Activated T-helper 2 cell treated with anti-CD3 and anti-CD28 coated beads, Interferon-gamma antibody, Interleukin-2, Interleukin-4, amounts not matched to agents 10 μg/mL and 5 μg/mL and 100 μg/mL, durations not matched to agents 14 hours and 24 hours and 36 hours (primary cell): ENCODE measurements at regions of chr20 and their contacts with region 1.

Region 1: DNA sequence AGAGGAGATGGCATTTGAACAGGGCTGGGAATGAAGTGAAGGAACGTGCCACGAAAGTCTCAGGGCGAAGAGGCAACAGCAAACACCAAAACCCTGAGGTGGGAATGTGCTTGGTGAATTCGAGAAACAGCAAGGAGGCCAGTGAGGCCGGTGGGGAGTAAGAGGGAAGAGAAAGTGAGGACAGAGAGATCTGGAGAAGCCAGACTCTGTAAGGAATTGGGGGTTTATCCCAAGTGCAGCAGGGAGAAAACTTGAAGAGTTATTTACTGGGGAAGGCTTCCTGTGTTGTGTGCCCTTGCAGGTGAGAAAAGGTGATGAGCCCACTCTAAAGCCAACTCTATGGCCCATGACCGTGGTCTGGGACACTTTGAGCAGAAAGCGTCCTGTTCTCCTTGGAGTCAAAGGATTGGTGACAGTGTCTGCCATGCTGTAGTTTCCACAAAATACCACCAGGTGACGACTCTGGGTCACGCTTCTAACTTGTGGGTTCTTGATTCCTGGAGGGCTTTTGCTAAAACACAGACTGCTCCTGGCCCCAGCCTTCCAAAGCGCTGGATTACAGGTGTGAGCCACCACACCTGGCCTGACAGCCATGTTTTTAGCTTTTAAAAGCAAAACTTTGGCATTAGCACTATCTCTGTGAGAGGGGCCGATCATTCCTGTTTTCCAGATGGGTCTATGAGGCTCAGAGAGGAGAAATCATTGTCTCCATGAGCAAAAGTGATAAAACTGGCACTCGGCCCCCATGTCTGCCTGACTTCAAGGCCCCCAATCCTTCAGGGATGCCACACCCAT is 18.0 kb upstream of the CSNK2A1 start:
- DNase-seq: peak; percentile 34
- H3K4me3 Mint-ChIP-seq: no peak overlapping the region
- H3K27ac Mint-ChIP-seq: no peak overlapping the region
- H3K4me1 Mint-ChIP-seq: no peaks in the 10 kb centered on the region
- H3K27me3 Mint-ChIP-seq: peaks cover 5% of the 10 kb centered on the region

Region 2: DNA sequence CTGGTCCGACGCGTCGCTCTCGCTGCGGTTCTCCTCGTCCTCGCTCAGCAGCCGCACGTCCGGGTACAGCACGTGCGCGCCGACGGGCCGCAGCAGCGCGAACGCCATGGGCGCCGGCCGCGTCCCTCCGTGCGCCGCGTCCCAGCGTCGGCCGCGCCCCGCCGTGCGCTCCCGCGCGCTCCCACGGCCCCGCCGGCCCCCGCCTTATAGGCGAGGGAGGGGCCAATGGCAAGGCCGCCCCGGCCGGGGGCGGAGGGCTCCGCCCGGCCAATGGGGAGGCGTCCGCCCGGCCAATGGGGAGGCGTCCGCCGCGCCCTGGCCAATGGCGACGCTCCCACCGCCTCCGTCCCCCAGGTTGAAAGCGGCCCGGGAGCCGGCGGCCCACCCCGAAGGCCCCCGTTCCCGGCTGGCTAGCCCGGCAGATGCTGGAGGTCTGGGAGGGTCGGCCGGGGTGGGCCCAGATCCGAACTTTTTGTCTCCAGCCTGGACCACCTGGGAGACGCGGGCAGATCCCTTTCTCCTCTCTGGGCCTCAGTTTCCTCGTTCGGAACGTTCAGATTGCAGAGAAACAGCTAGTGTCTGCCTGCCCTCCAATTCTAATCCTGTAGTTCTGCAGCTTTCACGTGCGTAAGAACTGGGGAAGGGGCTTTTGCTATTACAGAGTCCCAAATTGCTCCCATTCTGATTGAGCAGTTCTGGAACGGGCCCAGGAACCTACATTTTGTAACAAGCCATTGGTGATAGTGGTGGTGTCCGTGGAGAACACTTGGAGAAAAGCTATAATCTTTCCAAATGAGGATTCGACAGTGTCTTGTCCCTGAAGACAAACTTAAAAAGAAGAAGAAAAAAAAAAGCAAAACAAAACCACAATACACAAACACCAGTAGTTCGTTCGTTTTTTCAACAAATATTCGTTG is 48.8 kb after region 1 on chr20 and contains the start of gene TCF15:
- intact Hi-C with region 1: no loop called
- DNase-seq: no peak
- H3K4me3 Mint-ChIP-seq: no peak within 1 kb of the TSS
- H3K27ac Mint-ChIP-seq: no peak within 1 kb of the TSS
- H3K4me1 Mint-ChIP-seq: peaks cover 2% of the 10 kb centered on the region
- H3K27me3 Mint-ChIP-seq: peaks cover 45% of the 10 kb centered on the region
- total RNA-seq, gene TCF15: not detected in 2 replicates

Region 3: GRCh38 chr20:645318-646106 is 83.9 kb after region 1 on chr20:
- intact Hi-C with region 1: loop called (anchors 1 kb)
- DNase-seq: peak; percentile 68
- H3K4me3 Mint-ChIP-seq: no peak overlapping the region
- H3K27ac Mint-ChIP-seq: no peak overlapping the region
- H3K4me1 Mint-ChIP-seq: peaks cover 10% of the 10 kb centered on the region
- H3K27me3 Mint-ChIP-seq: peaks cover 20% of the 10 kb centered on the region

Region 4: DNA sequence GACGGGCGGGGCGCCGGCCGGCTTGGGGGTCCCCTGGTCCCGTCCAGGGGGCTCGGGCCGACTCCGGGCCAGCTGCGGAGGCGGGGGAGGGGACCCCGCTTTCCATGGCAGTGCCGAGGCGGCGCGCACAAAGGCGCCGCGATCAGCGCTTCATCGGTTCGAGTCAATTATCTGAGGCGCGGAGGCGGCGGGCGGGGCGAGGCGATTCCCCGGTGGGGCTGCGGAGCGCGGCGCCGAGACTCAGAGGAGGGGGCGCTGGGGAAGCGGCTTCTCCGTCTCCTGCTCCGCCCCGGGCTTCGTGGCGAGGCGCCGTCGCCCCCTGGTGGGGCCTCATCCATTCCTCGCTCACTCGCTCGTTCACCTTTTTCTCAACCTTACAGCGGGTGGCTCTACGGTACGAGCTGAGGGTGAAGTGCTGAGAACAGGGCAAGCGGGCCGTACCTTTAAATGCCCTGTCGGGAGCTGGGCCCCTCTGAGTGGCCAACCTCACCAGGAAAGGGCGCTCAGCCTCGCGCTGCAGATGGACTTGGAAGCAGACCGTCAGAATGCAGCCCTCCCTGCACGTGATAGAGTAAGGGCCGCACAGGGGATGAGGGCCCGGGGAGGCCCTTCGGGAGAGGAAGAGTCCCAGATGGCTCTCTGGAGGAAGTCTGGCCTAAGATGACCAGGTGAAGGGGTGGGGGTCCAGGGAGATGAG is 166.8 kb after region 1 on chr20:
- intact Hi-C with region 1: loop called (anchors 5 kb)
- DNase-seq: peak; percentile 19
- H3K4me3 Mint-ChIP-seq: no peak overlapping the region
- H3K27ac Mint-ChIP-seq: no peak overlapping the region
- H3K4me1 Mint-ChIP-seq: no peaks in the 10 kb centered on the region
- H3K27me3 Mint-ChIP-seq: peaks cover 33% of the 10 kb centered on the region